ENCODE measurements at regions of chr15 and their contacts with region 1.

Region 1: GRCh38 chr15:56245871-56246814 is 2.5 kb upstream of the RFX7 start:
- DNase-seq: peak; percentile 90 to 95
- ATAC-seq: peak; percentile 59 to 85
- H3K4me3 ChIP-seq: peak overlapping the region; percentile 41
- H3K27ac ChIP-seq: peak overlapping the region; percentile 98 to 99
- H3K4me1 ChIP-seq: peaks cover 19% of the 10 kb centered on the region
- CTCF ChIP-seq: peak; percentile 100
- EP300 ChIP-seq: no peak
- POLR2A ChIP-seq: no peak
- RAD21 ChIP-seq: peak; percentile 92 to 94

Region 2: GRCh38 chr15:56232058-56232457 is 14.1 kb before region 1 on chr15:
- CTCF ChIA-PET with region 1: interaction called, 14 read pairs
- POLR2A ChIA-PET with region 1: no interaction called
- DNase-seq: peak in 1 of 2 experiments; percentile 46
- ATAC-seq: no peak
- H3K4me3 ChIP-seq: no peak overlapping the region
- H3K27ac ChIP-seq: no peak overlapping the region
- H3K4me1 ChIP-seq: peaks cover 3% of the 10 kb centered on the region; the same call in 2 of the 3 replicates
- CTCF ChIP-seq: no peak
- EP300 ChIP-seq: no peak
- POLR2A ChIP-seq: no peak
- RAD21 ChIP-seq: no peak

Region 3: GRCh38 chr15:56261854-56262509 is 15.8 kb after region 1 on chr15:
- CTCF ChIA-PET with region 1: interaction called, 19 read pairs
- POLR2A ChIA-PET with region 1: no interaction called
- DNase-seq: peak in 1 of 2 experiments; percentile 59
- ATAC-seq: peak; percentile 75 to 78; a peak in 5 of 6 replicates
- H3K4me3 ChIP-seq: no peak overlapping the region
- H3K27ac ChIP-seq: no peak overlapping the region
- H3K4me1 ChIP-seq: peaks cover 6% of the 10 kb centered on the region; the same call in 2 of the 3 replicates
- CTCF ChIP-seq: no peak
- EP300 ChIP-seq: no peak
- POLR2A ChIP-seq: no peak
- RAD21 ChIP-seq: no peak

Region 4: DNA sequence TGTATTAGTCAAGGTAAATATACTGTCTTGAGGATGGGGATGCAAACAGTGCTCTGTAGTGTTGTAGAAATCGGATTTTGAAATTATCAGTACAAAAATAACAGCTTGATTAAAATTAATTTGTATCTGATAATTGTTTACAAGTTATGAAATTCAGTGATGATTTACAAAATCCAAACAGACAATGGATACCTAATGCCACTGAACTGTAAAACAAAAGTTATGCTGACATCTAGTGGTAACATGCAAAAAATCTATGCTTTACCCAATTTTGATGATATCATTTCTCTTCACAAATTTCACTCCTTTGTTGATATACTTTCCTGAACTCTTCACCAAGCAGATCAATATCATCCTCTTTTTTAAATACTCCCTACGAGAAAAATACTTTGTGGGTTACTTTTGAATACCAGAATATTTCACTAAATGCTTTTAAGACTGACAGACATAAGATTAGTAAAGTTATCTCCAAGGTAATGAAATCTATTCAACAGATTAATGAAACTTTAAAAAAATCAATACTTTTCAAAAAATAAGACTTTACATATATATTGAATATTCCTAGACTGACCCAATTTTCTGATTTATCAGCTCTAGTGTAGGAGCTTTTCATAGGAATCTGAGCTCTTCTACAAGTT is 182.8 kb after region 1 on chr15:
- CTCF ChIA-PET with region 1: interaction called, 45 read pairs
- POLR2A ChIA-PET with region 1: no interaction called
- DNase-seq: peak; percentile 45 to 47
- ATAC-seq: peak; percentile 76; a peak in 5 of 6 replicates
- H3K4me3 ChIP-seq: no peak overlapping the region
- H3K27ac ChIP-seq: no peak overlapping the region
- H3K4me1 ChIP-seq: no peaks in the 10 kb centered on the region
- CTCF ChIP-seq: peak; percentile 80
- EP300 ChIP-seq: no peak
- POLR2A ChIP-seq: no peak
- RAD21 ChIP-seq: peak; percentile 82 to 83